ENCODE measurements at regions of chr13 and their contacts with region 1.

Region 1: GRCh38 chr13:101115762-101116171 is 300.5 kb downstream of the NALCN start:
- DNase-seq: no peak
- ATAC-seq: no peak
- H3K4me3 ChIP-seq: no peak overlapping the region
- H3K27ac ChIP-seq: no peak overlapping the region
- H3K4me1 ChIP-seq: no peaks in the 10 kb centered on the region
- H3K27me3 ChIP-seq: peaks cover 0 to 3% of the 10 kb centered on the region in 2 experiments; a peak in 2 of 5 replicates
- CTCF ChIP-seq: no peak
- EP300 ChIP-seq: no peak
- POLR2A ChIP-seq: no peak
- RAD21 ChIP-seq: no peak

Region 2: DNA sequence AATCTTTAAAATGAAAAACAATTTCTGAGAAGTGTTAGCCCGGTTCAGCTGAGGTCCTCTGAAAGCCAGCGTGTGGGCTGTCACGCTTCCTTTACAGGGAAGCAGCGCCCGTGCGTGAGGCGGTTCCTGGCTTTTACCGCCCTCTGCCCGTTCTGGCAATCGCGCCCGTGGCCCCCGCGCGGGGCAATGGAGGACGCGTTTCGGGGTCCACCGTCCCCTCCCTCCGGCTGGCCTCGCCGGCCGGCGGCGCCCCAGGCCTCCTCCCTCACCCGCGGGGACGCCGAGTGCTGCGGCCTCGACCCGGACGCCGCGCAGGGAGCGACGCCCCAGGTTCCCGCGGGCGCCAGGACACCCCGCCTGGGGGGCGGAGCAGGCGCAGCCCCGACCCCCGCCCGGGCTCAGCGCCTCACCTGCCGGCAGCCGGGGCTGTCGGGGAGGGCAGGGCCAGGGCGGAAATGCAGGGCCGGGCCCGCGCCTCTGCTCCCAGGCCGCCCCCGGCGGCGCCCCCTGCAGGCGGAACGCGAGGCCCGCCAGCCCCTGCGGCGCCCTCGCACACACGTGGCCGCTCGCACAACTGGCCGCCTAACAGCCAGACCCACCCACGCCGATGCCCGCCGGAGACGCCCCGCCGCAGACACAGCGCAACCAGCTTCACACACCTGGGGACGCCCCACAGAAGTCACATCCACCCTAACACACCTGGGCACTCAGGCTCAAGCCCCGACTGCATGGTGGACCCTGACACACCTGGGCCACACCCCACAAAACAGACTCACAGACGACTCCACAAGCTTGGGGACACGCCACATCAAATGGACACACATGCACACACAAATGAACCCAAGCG is 527.2 kb before region 1 on chr13 and contains the start of gene GGACT:
- CTCF ChIA-PET with region 1: no interaction called
- POLR2A ChIA-PET with region 1: no interaction called
- in situ Hi-C with region 1: loop called (anchors 25 kb)
- intact Hi-C with region 1: no loop called
- DNase-seq: peak; percentile 37
- ATAC-seq: peak; percentile 94
- H3K4me3 ChIP-seq: peak within 1 kb of the TSS; percentile 43 to 76 (median 68)
- H3K27ac ChIP-seq: no peak within 1 kb of the TSS
- H3K4me1 ChIP-seq: peaks cover 23% of the 10 kb centered on the region
- H3K27me3 ChIP-seq: no peaks in the 10 kb centered on the region
- CTCF ChIP-seq: peak; percentile 80
- EP300 ChIP-seq: 0 out of 4 replicates have a peak, but pooled peaks of 1 of the 2 experiments have one; percentile 9
- POLR2A ChIP-seq: peak; percentile 29 to 43; a peak in 2 of 4 replicates
- RAD21 ChIP-seq: peak; percentile 86
- total RNA-seq, gene GGACT: 1.6 and 1.9 TPM in 2 replicates

Region 3: DNA sequence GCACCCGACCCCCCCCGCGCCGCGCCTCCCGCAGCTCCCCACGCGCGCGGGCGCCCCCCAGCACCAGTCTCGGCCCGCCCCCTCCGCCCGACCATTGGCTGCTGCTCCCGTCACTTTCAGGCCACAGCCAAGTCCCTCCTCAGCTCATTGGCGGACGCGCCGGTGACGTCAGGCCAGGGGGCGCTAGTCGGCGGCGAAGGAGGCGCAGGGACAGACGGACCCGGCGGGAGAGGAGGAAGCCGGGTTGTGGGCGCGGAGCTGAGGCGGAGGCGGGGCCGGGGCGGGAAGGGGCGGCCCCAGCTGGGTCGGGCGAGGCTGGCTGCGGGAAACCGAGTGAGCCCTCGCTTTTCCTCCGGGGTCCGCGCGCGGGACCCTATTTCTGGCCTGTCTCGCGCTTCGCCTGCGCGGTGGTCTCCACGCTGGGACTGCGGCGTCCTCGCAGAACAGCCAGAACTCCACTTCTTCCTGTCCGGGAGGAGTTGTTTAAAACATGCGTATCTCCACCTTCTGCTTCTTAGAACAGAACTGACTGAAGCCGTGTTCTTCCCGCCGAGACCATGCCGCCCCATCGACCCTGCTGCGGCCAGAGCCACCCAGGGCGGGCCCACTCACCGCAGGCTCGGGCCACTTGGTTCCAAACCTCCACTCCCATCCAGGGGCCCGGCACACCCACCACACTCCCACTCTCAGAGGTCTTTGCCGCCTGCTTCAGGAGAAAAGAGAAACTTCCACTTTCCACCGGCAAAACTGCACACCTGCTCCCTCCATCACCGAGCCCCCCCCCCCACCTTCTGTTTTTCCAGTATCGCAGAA is 440.7 kb before region 1 on chr13:
- CTCF ChIA-PET with region 1: no interaction called
- POLR2A ChIA-PET with region 1: no interaction called
- in situ Hi-C with region 1: loop called (anchors 25 kb)
- intact Hi-C with region 1: no loop called
- DNase-seq: peak; percentile 93
- ATAC-seq: peak; percentile 93
- H3K4me3 ChIP-seq: peak overlapping the region; percentile 62 to 80 (median 78)
- H3K27ac ChIP-seq: peak overlapping the region; percentile 71
- H3K4me1 ChIP-seq: peaks cover 34% of the 10 kb centered on the region
- H3K27me3 ChIP-seq: 0 out of 5 replicates have a peak, but pooled peaks cover 0 to 4% of the 10 kb centered on the region in 2 experiments
- CTCF ChIP-seq: peak; percentile 88
- EP300 ChIP-seq: no peak
- POLR2A ChIP-seq: peak; percentile 20 to 83; a peak in 3 of 4 replicates
- RAD21 ChIP-seq: no peak; the same call in 1 of the 2 replicates

Region 4: GRCh38 chr13:101327871-101328270 is 212.1 kb after region 1 on chr13:
- CTCF ChIA-PET with region 1: no interaction called
- POLR2A ChIA-PET with region 1: no interaction called
- in situ Hi-C with region 1: no loop called
- intact Hi-C with region 1: no loop called
- DNase-seq: no peak
- ATAC-seq: no peak
- H3K4me3 ChIP-seq: no peak overlapping the region
- H3K27ac ChIP-seq: no peak overlapping the region
- H3K4me1 ChIP-seq: no peaks in the 10 kb centered on the region
- H3K27me3 ChIP-seq: no peaks in the 10 kb centered on the region
- CTCF ChIP-seq: no peak
- EP300 ChIP-seq: no peak
- POLR2A ChIP-seq: no peak
- RAD21 ChIP-seq: no peak